Left colon (tissue), 2 donors: ENCODE measurements at regions of chr21 and their contacts with region 1.

Region 1: DNA sequence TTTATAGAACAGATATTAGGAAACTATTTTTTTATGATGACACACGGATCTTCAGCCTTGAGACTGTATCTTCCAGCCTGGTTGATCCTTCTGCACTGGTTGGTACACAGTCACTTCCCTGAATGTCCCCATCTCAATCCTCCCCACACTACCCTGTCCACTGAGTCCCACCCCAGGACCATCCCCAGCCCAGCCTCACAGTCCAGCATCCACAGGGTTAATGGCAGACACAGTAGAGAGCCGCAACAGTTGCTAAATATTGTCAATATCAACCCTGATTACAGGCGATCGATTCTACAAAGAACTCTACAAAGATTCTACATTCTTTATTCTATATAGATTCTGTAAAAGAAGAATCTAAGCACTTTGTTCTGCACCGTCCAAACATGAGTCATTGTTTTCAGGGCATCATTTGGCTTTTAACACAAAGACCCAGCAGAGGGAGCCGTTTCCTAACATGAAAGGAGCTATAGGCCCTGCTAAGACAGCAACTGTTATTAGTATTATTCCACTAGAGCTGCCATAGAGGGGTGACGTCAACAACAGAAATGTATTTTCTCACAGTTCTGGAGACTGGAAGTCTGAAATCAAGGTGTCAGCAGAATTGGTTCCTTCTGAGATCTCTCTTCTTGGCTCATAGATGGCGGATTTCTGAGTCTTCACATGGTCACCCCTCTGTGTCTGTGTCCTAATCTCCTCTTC is 30.1 kb upstream of the IFNAR2 start:
- DNase-seq: peak; percentile 76 to 83
- ATAC-seq: peak; percentile 48

Region 2: GRCh38 chr21:32834916-32835235 is 364.8 kb before region 1 on chr21:
- intact Hi-C with region 1: loop called in 1 of 2 experiments (anchors 10 kb)
- DNase-seq: no peak
- ATAC-seq: no peak

Region 3: DNA sequence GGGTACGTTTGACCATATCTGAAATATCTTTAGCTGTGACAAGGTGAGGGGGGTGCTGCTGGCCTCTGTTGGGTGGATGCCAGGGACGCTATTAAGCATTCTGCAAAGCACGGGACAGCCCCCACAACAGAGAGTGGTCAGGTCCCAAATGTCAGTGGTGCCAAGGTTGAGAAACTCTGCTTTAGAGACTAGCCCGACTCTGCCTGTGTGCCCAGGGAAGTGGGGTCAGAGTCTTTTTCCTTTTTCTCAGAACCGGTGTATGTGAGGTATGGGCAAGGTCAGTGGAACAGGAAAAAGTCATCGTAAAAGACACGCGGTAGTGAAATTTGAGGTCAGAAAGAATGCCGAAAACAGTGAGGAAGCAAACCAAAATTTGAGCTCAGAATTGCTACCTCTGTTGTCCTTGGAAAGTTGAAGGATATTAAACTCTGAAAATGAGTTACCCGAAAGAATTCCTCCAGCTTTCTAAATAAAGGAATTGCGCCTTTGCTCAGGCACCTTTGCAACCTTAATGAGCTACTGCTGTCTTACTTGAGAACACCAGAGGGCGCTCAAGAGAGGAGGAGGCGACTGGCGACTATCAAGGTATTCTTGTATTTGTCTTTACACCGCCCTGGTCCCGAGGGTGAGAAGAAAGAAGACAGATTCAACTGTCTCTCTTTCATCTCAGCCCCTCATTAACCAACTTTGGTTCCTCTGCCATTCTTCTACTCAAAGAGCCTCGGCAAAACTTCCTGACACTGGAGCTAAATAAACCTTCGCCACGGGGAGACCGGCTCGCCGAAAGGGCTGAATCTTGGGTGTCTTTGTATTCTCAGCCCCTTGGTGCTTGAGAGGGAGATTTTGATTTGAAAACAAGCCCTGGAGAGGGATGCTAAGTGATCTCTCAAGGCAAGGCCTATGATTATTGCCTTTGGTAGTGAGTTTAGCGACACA is 259.3 kb before region 1 on chr21:
- intact Hi-C with region 1: loop called in 1 of 2 experiments (anchors 5 kb)
- DNase-seq: peak in 1 of 2 donors; percentile 24
- ATAC-seq: peak; percentile 66

Region 4: GRCh38 chr21:33266050-33266788 is 66.6 kb after region 1 on chr21 and contains the start of gene IL10RB:
- intact Hi-C with region 1: loop called in 1 of 2 experiments (anchors 10 kb)
- DNase-seq: peak; percentile 79 to 85
- ATAC-seq: peak; percentile 70
- total RNA-seq, gene IL10RB: 79.7 to 103 TPM

Region 5: DNA sequence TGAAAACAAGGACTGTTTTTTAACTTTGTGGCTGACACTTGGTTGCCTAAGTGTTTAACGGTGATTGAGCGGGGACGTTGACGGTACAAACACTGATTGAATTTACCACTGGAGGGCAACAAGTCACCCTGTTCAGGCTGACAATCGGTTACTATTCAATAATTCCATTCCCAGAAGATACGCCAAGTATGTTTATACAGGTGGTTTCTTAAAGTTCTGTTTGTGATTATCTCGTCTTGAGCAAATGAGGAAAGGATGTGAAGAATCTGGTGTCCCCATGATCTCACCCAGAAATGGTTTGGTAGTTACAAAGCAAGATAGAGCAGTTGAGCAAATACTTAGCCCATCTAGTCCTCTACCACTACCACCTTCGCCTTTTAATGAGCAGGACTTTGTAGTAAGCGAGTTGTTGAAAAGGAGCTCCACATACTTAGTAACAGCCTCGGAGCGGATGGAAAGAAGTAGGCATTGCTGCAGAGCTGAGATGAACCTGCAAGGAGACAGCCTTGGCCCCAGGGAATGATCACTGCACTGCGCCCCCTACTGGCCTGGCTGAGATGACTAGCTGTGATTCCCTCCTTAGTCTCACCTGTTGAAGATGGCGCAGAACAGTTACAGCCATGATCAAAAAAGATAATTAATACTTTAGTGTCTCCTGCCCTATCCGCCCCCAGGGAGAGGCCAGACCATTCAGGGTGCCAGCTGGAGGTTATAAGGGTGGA is 161.4 kb after region 1 on chr21:
- intact Hi-C with region 1: loop called in 1 of 2 experiments (anchors 5 kb)
- DNase-seq: peak; percentile 71 to 87
- ATAC-seq: peak; percentile 73

Region 6: GRCh38 chr21:33383056-33383888 is 183.6 kb after region 1 on chr21:
- intact Hi-C with region 1: no loop called
- DNase-seq: peak; percentile 72 to 78
- ATAC-seq: peak; percentile 35

Region 7: GRCh38 chr21:33441489-33442477 is 242.1 kb after region 1 on chr21:
- intact Hi-C with region 1: loop called in 1 of 2 experiments (anchors 2 kb)
- DNase-seq: peak; percentile 54 to 56
- ATAC-seq: peak; percentile 88

Region 8: DNA sequence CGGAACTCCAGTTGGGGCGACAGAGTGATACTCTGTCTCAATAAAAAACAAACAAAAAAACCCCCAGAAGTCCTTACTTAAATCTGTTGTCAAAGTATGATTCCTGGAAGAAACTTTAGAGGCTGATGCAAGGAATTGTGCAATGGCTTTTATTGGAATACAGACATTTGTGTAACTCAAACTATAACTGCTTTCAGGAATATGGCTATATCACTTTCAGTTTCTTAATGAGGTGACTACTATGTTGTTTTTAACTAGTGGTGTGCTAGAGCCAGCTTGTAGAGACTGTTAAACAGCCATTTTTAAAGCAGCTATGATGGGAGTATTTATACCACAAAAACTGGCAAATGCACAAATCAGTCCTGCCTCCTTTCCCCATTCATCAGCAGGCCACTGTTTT is 314.6 kb after region 1 on chr21:
- intact Hi-C with region 1: no loop called
- DNase-seq: no peak
- ATAC-seq: no peak